Endothelial cell of umbilical vein (primary cell): ENCODE measurements at regions of chr1 and their contacts with region 1.

Region 1: DNA sequence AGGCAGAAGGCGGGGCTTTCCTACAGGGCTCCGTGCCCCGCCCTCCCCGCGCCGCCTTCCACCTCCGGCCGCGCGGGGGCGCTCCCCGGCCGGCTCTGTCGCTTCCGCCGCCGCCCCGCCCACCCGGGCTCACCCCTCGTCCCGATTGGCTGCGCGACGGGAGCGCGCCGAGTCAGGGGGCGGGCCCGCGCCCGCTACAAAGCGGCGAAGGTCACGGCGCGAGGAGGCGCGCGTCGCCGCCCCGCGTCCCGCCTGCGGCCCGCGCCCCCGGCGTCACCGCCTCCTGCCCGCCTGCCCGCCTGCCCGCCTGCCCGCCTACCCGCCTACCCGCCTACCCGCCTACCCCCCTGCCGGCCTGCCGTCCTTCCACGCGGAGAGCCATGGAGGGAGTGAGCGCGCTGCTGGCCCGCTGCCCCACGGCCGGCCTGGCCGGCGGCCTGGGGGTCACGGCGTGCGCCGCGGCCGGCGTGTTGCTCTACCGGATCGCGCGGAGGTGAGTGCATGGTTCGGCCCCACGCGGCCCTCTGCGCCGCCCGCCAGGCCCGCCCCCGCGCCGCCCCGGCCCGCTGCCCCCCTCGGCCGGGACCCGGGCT is at the start of gene TMEM201:
- DNase-seq: peak; percentile 92
- H3K4me3 ChIP-seq: peak within 1 kb of the TSS; percentile 54 to 75 (median 71)
- H3K27ac ChIP-seq: peak within 1 kb of the TSS; percentile 3
- H3K4me1 ChIP-seq: peaks cover 20% of the 10 kb centered on the region
- H3K27me3 ChIP-seq: no peaks in the 10 kb centered on the region
- CTCF ChIP-seq: peak; percentile 70 to 76
- POLR2A ChIP-seq: no peak
- total RNA-seq, gene TMEM201: 21.0 and 24.8 TPM in 2 replicates

Region 2: DNA sequence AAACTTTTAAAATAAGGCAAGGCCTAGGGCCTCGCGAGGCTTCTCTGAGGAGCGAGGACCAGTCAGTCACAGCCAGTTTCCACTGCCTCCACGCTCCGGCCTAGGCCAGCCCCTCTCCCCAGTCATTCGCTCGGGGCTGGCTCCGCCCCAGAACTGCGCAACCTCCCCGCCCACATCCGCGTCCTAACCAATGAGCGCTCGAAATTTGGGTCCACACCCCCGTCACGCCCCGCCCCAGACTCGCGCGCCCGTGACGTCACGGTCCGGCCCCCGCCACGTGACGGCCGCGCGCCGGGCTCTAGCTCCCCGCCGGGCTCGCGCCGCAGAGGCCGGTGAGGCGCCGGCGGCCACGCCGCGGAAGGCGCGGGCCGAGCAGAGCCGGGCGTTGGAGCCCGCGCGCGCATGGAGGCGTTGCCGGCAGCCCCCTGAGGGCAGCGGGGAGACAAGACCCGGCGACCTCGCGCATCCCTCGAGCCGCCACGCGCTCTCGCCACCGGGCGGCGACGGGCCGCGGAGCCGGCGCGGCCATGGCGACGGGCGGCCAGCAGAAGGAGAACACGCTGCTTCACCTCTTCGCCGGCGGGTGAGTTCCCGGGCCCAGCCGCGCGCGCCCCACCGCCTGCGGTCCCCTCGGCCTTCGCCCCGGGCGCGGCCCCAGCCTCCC is 49.4 kb before region 1 on chr1 and contains the start of gene SLC25A33:
- CTCF ChIA-PET with region 1: interaction called, 4 read pairs
- POLR2A ChIA-PET with region 1: no interaction called
- dilution Hi-C with region 1: no loop called
- intact Hi-C with region 1: loop called (anchors 1 kb)
- DNase-seq: peak; percentile 98
- H3K4me3 ChIP-seq: peak within 1 kb of the TSS; percentile 12 to 62 (median 52)
- H3K27ac ChIP-seq: peak within 1 kb of the TSS; percentile 70
- H3K4me1 ChIP-seq: peaks cover 15% of the 10 kb centered on the region
- H3K27me3 ChIP-seq: no peaks in the 10 kb centered on the region
- CTCF ChIP-seq: no peak
- POLR2A ChIP-seq: peak; percentile 90
- total RNA-seq, gene SLC25A33: 6.4 and 6.6 TPM in 2 replicates

Region 3: GRCh38 chr1:9615316-9616063 is 26.8 kb after region 1 on chr1:
- CTCF ChIA-PET with region 1: interaction called, 19 read pairs
- POLR2A ChIA-PET with region 1: no interaction called
- dilution Hi-C with region 1: no loop called
- intact Hi-C with region 1: loop called (anchors 1 kb)
- DNase-seq: peak; percentile 36
- H3K4me3 ChIP-seq: no peak overlapping the region
- H3K27ac ChIP-seq: no peak overlapping the region
- H3K4me1 ChIP-seq: no peaks in the 10 kb centered on the region
- H3K27me3 ChIP-seq: no peaks in the 10 kb centered on the region
- CTCF ChIP-seq: peak; percentile 58 to 80
- POLR2A ChIP-seq: no peak